ENCODE measurements at regions of chr9 and their contacts with region 1.

Region 1: GRCh38 chr9:99445371-99445891 is 223.3 kb downstream of the SEC61B start:
- DNase-seq: peak; percentile 55 to 79
- ATAC-seq: peak; percentile 90 to 100 (median 96)
- H3K4me3 ChIP-seq: no peak overlapping the region
- H3K27ac ChIP-seq: peak overlapping the region in 9 of 10 donors; percentile 44 to 85 (median 72)
- H3K4me1 ChIP-seq: peaks cover 0 to 22% (median 9%) of the 10 kb centered on the region in 9 donors
- H3K27me3 ChIP-seq: no peaks in the 10 kb centered on the region
- CTCF ChIP-seq: no peak

Region 2: GRCh38 chr9:99266255-99267023 is 179.0 kb before region 1 on chr9:
- intact Hi-C with region 1: loop called in 1 of 10 experiments (anchors 10 kb)
- DNase-seq: peak; percentile 68 to 74
- ATAC-seq: peak; percentile 55 to 92 (median 83)
- H3K4me3 ChIP-seq: no peak overlapping the region
- H3K27ac ChIP-seq: no peak overlapping the region
- H3K4me1 ChIP-seq: peaks cover 0 to 12% (median 6%) of the 10 kb centered on the region in 9 donors
- H3K27me3 ChIP-seq: no peaks in the 10 kb centered on the region
- CTCF ChIP-seq: peak; percentile 69 to 91 (median 88)

Region 3: GRCh38 chr9:99353408-99353807 is 92.0 kb before region 1 on chr9:
- intact Hi-C with region 1: loop called in 4 of 10 experiments (anchors 1 to 5 kb)
- DNase-seq: no peak
- ATAC-seq: no peak
- H3K4me3 ChIP-seq: no peak overlapping the region
- H3K27ac ChIP-seq: peak overlapping the region in 1 of 10 donors; percentile 43
- H3K4me1 ChIP-seq: peaks cover 0 to 23% (median 12%) of the 10 kb centered on the region in 9 donors
- H3K27me3 ChIP-seq: no peaks in the 10 kb centered on the region
- CTCF ChIP-seq: no peak

Region 4: GRCh38 chr9:99411797-99412115 is 33.7 kb before region 1 on chr9:
- intact Hi-C with region 1: loop called in 1 of 10 experiments (anchors 1 kb)
- DNase-seq: peak; percentile 20 to 24
- ATAC-seq: peak in 6 of 8 donors; percentile 37 to 74 (median 47)
- H3K4me3 ChIP-seq: no peak overlapping the region
- H3K27ac ChIP-seq: no peak overlapping the region
- H3K4me1 ChIP-seq: peaks cover 0 to 8% (median 3%) of the 10 kb centered on the region in 9 donors
- H3K27me3 ChIP-seq: no peaks in the 10 kb centered on the region
- CTCF ChIP-seq: no peak

Region 5: DNA sequence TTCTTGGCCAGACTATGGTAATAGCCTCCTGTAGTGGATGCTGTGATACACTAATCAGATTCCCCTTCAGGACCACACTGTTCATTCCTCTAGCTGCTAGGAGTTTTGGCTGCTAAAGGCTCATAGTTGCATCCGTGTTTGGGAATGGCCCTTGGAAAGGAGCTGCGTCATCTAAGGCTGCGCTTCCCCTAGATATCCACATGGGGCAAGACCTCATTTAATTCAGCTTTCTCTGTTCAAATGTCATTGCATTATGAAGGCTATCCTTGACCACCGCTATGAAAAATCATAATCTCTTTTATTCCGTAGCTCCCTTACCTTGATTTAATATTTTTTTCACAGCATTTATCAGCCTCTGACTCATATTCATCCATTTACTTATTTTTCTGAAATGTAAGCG is 117.9 kb after region 1 on chr9:
- intact Hi-C with region 1: loop called in 3 of 10 experiments (anchors 5 kb)
- DNase-seq: no peak
- ATAC-seq: no peak
- H3K4me3 ChIP-seq: no peak overlapping the region
- H3K27ac ChIP-seq: no peak overlapping the region
- H3K4me1 ChIP-seq: peaks cover 0 to 18% (median 0%) of the 10 kb centered on the region in 9 donors
- H3K27me3 ChIP-seq: no peaks in the 10 kb centered on the region
- CTCF ChIP-seq: peak in 1 of 9 donors; percentile 16

Region 6: GRCh38 chr9:99796231-99796630 is 350.8 kb after region 1 on chr9:
- intact Hi-C with region 1: no loop called
- DNase-seq: no peak
- ATAC-seq: no peak
- H3K4me3 ChIP-seq: no peak overlapping the region
- H3K27ac ChIP-seq: no peak overlapping the region
- H3K4me1 ChIP-seq: no peaks in the 10 kb centered on the region
- H3K27me3 ChIP-seq: no peaks in the 10 kb centered on the region
- CTCF ChIP-seq: no peak

Measured in heart right ventricle (tissue), 16 donors.